ENCODE measurements at regions of chr19 and their contacts with region 1.

Region 1: DNA sequence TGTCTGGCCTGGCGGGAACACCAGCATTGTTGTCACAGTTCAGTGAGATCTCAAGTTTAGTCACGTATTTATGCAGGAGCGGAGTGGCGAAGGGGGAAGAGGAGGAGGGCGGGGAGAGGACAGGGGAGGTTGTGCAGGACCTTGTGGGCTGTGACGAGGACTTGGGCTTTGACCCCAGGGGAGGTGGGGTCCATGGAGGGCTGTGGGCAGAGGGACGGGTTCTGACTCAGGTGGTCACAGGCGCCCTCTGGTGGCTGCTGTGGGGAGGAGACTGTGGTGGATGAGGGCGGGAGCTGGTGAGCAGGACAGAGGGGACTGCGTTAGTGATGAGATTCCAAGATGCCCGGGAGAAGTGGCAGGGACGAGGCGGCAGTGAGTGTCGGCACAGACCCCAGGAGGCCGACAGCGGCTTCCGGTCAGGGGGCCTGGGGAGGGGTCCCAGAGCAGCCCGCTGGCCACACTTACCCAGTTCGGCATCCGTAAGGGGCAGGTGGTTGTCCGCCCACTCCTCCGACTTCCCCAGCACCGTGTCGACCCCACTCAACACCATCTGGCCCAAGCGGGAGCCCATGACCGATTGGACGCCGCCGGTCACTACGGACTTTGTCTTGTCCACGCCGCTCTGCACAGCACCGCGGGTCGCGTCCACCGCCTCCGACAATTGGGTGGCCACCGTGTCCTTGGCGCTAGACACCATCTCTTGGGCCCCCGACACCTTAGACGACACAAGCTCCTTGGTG is 15.7 kb downstream of the PLIN3 start:
- DNase-seq: no peak
- ATAC-seq: peak; percentile 96
- H3K4me3 ChIP-seq: no peak overlapping the region
- H3K27ac ChIP-seq: no peak overlapping the region; the same call in 1 of the 2 replicates
- H3K4me1 ChIP-seq: peaks cover 28% of the 10 kb centered on the region
- H3K27me3 ChIP-seq: no peaks in the 10 kb centered on the region
- CTCF ChIP-seq: peak; percentile 88 to 92 (median 88)
- EP300 ChIP-seq: no peak
- POLR2A ChIP-seq: no peak; the same call in 1 of the 2 replicates
- RAD21 ChIP-seq: peak; percentile 84

Region 2: GRCh38 chr19:4803736-4804695 is 47.7 kb before region 1 on chr19:
- CTCF ChIA-PET with region 1: interaction called, 346 read pairs
- POLR2A ChIA-PET with region 1: no interaction called
- RAD21 ChIA-PET with region 1: interaction called, 158 read pairs
- SMC1A ChIA-PET with region 1: interaction called, 176 read pairs
- in situ Hi-C with region 1: loop called (anchors 5 kb)
- intact Hi-C with region 1: loop called (anchors 1 kb)
- DNase-seq: no peak
- ATAC-seq: peak; percentile 95
- H3K4me3 ChIP-seq: no peak overlapping the region
- H3K27ac ChIP-seq: no peak overlapping the region
- H3K4me1 ChIP-seq: peaks cover 6% of the 10 kb centered on the region
- H3K27me3 ChIP-seq: no peaks in the 10 kb centered on the region
- CTCF ChIP-seq: peak; percentile 86 to 93 (median 90)
- EP300 ChIP-seq: no peak
- POLR2A ChIP-seq: no peak
- RAD21 ChIP-seq: peak; percentile 66

Region 3: GRCh38 chr19:4831304-4831978 is 20.3 kb before region 1 on chr19 and contains the start of gene TICAM1:
- CTCF ChIA-PET with region 1: interaction called, 27 read pairs
- POLR2A ChIA-PET with region 1: interaction called, 6 read pairs
- RAD21 ChIA-PET with region 1: interaction called, 22 read pairs
- SMC1A ChIA-PET with region 1: interaction called, 6 read pairs
- in situ Hi-C with region 1: no loop called
- intact Hi-C with region 1: no loop called
- DNase-seq: no peak
- ATAC-seq: peak; percentile 80
- H3K4me3 ChIP-seq: peak within 1 kb of the TSS; percentile 95
- H3K27ac ChIP-seq: peak within 1 kb of the TSS; percentile 92
- H3K4me1 ChIP-seq: no peaks in the 10 kb centered on the region
- H3K27me3 ChIP-seq: no peaks in the 10 kb centered on the region
- CTCF ChIP-seq: no peak
- EP300 ChIP-seq: no peak; a peak in 1 of 4 replicates
- POLR2A ChIP-seq: peak; percentile 86
- RAD21 ChIP-seq: no peak
- polyA plus RNA-seq, gene TICAM1: 0.31 to 0.99 TPM

Region 4: GRCh38 chr19:4839186-4839585 is 12.5 kb before region 1 on chr19:
- CTCF ChIA-PET with region 1: interaction called, 17 read pairs
- POLR2A ChIA-PET with region 1: interaction called, 6 read pairs
- RAD21 ChIA-PET with region 1: interaction called, 4 read pairs
- SMC1A ChIA-PET with region 1: interaction called, 5 read pairs
- in situ Hi-C with region 1: no loop called
- intact Hi-C with region 1: no loop called
- DNase-seq: no peak
- ATAC-seq: no peak
- H3K4me3 ChIP-seq: no peak overlapping the region
- H3K27ac ChIP-seq: no peak overlapping the region
- H3K4me1 ChIP-seq: peaks cover 28% of the 10 kb centered on the region
- H3K27me3 ChIP-seq: no peaks in the 10 kb centered on the region
- CTCF ChIP-seq: no peak
- EP300 ChIP-seq: no peak
- POLR2A ChIP-seq: no peak
- RAD21 ChIP-seq: no peak

Region 5: GRCh38 chr19:4867534-4868285 is 16.0 kb after region 1 on chr19 and contains the start of gene PLIN3:
- CTCF ChIA-PET with region 1: interaction called, 17 read pairs
- POLR2A ChIA-PET with region 1: interaction called, 4 read pairs
- RAD21 ChIA-PET with region 1: interaction called, 3 read pairs
- SMC1A ChIA-PET with region 1: interaction called, 7 read pairs
- in situ Hi-C with region 1: no loop called
- intact Hi-C with region 1: no loop called
- DNase-seq: peak; percentile 65
- ATAC-seq: peak; percentile 86
- H3K4me3 ChIP-seq: peak within 1 kb of the TSS; percentile 98
- H3K27ac ChIP-seq: peak within 1 kb of the TSS; percentile 85
- H3K4me1 ChIP-seq: peaks cover 15% of the 10 kb centered on the region
- H3K27me3 ChIP-seq: no peaks in the 10 kb centered on the region
- CTCF ChIP-seq: no peak
- EP300 ChIP-seq: no peak
- POLR2A ChIP-seq: peak; percentile 74
- RAD21 ChIP-seq: no peak
- polyA plus RNA-seq, gene PLIN3: 7.7 to 19.0 TPM

Region 6: DNA sequence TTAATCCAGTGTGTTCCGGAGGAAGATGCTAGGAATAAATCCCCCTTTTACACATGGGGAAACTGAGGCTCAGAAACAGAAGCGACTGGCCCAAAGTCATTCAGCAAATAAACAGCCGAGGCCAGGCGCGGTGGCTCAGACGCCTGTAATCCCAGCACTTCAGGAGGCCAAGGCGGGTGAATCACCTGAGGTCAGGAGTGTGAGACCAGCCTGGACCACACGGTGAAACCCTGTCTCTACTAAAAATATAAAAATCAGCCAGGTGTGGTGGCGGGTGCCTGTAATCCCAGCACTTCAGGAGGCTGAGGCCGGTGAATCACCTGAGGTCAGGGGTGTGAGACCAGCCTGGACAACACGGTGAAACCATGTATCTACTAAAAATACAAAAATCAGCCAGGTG is 27.3 kb after region 1 on chr19:
- CTCF ChIA-PET with region 1: no interaction called
- POLR2A ChIA-PET with region 1: no interaction called
- RAD21 ChIA-PET with region 1: no interaction called
- SMC1A ChIA-PET with region 1: no interaction called
- in situ Hi-C with region 1: no loop called
- intact Hi-C with region 1: no loop called
- DNase-seq: no peak
- ATAC-seq: no peak
- H3K4me3 ChIP-seq: no peak overlapping the region
- H3K27ac ChIP-seq: no peak overlapping the region
- H3K4me1 ChIP-seq: peaks cover 6% of the 10 kb centered on the region
- H3K27me3 ChIP-seq: no peaks in the 10 kb centered on the region
- CTCF ChIP-seq: no peak
- EP300 ChIP-seq: no peak
- POLR2A ChIP-seq: no peak
- RAD21 ChIP-seq: no peak

Measured in GM12878 (cell line).